Heart left ventricle (tissue), 16 donors: ENCODE measurements at regions of chr1 and their contacts with region 1.

Region 1: DNA sequence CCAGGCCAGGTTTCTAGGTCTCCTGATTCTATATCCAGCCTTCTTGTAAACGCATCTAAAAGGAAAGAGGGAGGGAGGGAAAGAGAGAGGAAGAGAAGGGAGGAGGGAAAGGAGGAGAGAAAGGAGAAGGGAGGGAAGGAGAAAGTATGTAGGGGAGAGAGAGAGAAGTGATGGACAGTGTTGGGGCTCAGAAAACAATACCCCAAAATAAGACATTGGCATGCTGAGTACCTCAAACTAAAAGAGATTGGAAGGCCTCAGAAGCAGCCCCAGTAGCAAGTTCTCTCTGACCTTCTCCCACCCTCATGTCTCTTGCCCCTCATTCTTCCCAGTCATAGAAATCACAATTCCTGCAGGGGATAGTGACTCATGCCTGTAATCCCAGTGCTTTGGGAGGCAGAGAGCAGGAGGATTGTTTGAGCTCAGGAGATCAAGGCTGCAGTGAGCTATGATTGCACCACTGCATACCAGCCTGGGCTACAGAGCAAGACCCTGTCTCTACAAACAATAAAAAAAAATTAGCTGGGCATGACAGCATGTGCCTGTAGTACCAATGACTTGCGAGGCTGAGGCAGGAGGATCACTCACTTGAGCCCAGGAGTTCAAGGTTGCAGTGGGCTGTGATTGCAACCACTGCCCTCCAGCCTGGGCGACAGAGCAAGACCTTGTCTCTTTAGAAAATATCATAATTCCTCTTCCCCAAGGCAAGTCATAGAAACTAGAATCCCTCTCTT is 51.2 kb downstream of the DNTTIP2 start:
- DNase-seq: no peak
- ATAC-seq: no peak
- H3K4me3 ChIP-seq: no peak overlapping the region
- H3K27ac ChIP-seq: no peak overlapping the region
- H3K4me1 ChIP-seq: no peaks in the 10 kb centered on the region
- H3K27me3 ChIP-seq: no peaks in the 10 kb centered on the region
- CTCF ChIP-seq: no peak
- POLR2A ChIP-seq: no peak

Region 2: DNA sequence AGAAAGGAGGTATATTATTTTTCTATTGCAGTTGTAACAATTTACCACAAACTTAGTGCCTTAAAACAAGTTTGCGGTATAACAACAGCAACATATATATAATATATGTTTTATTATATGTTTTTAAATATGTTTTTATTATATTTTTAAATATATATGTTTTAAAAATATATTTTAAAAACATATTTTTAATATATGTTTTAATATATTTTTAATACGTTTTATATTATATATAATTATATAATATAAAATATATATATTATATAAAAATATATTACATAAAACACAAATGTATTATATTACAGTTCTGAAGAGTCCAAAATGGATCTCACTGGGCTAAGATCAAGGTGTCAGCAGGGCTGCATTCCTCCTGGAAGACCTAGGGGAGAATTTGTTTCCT is 407.4 kb before region 1 on chr1:
- intact Hi-C with region 1: loop called in 1 of 10 experiments (anchors 5 kb)
- DNase-seq: no peak
- ATAC-seq: no peak
- H3K4me3 ChIP-seq: no peak overlapping the region
- H3K27ac ChIP-seq: no peak overlapping the region
- H3K4me1 ChIP-seq: peaks cover 0 to 5% (median 0%) of the 10 kb centered on the region in 12 donors
- H3K27me3 ChIP-seq: no peaks in the 10 kb centered on the region
- CTCF ChIP-seq: no peak
- POLR2A ChIP-seq: no peak

Region 3: GRCh38 chr1:93629099-93630059 is 198.4 kb before region 1 on chr1:
- intact Hi-C with region 1: no loop called
- DNase-seq: peak in 2 of 5 donors; percentile 49 to 56
- ATAC-seq: peak; percentile 47 to 68 (median 60)
- H3K4me3 ChIP-seq: no peak overlapping the region
- H3K27ac ChIP-seq: peak overlapping the region in 1 of 12 donors; percentile 34
- H3K4me1 ChIP-seq: peaks cover 0 to 34% (median 24%) of the 10 kb centered on the region in 12 donors
- H3K27me3 ChIP-seq: no peaks in the 10 kb centered on the region
- CTCF ChIP-seq: peak; percentile 75 to 94 (median 88)
- POLR2A ChIP-seq: no peak

Region 4: DNA sequence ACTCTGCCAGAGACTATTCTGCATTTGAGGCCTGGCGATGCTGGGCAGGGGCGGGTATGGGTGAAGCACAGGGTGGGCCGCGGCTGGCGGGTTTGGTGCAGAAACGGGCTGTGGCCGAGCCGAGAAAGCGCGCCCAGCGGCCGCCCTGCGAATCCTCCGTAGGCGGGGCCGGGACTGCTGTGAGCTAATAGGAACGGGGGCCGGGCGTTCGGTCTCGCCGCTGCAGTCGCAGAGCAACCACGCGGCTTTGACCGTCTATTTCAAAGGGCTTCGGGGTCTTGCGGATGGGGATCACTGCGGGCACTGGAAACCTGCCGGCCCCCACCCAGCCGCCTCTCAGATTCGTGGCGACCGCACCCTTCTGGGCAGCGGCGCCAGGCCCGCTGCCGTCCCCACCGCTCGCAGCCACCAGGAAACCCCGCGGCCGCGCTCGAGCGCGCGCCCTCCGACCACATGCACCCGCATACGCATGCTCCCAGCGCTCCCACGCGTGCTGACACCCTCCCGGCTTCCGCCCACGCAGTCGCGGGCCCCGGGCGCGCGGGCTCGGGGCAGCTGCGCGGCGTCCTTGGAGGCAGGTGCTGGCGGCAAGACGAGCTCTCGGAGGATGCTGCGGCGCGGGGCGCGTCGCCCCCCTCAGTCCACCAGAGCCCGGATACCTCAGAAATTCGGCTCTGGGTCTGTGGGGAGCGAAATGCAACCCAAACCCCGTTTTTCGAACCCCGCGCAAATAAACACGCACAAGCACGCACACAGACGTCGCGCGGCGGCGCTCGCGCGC is 18.6 kb after region 1 on chr1:
- intact Hi-C with region 1: no loop called
- DNase-seq: peak; percentile 89 to 93 (median 90)
- ATAC-seq: peak; percentile 49 to 78 (median 74)
- H3K4me3 ChIP-seq: peak overlapping the region; percentile 79 to 93 (median 86)
- H3K27ac ChIP-seq: peak overlapping the region; percentile 87 to 99 (median 98)
- H3K4me1 ChIP-seq: peaks cover 0 to 34% (median 22%) of the 10 kb centered on the region in 12 donors
- H3K27me3 ChIP-seq: no peaks in the 10 kb centered on the region
- CTCF ChIP-seq: peak in 9 of 12 donors; percentile 17 to 59 (median 39)
- POLR2A ChIP-seq: peak in 1 of 2 donors; percentile 47

Region 5: GRCh38 chr1:93904228-93904627 is 76.4 kb after region 1 on chr1:
- intact Hi-C with region 1: no loop called
- DNase-seq: no peak
- ATAC-seq: no peak
- H3K4me3 ChIP-seq: peak overlapping the region in 1 of 12 donors; percentile 11
- H3K27ac ChIP-seq: peak overlapping the region in 1 of 12 donors; percentile 69
- H3K4me1 ChIP-seq: peaks cover 0 to 51% (median 13%) of the 10 kb centered on the region in 12 donors
- H3K27me3 ChIP-seq: no peaks in the 10 kb centered on the region
- CTCF ChIP-seq: no peak
- POLR2A ChIP-seq: no peak